ENCODE measurements at regions of chr4 and their contacts with region 1.

Region 1: GRCh38 chr4:109433205-109434006 is at the start of gene SEC24B:
- DNase-seq: peak; percentile 82 to 83
- ATAC-seq: peak; percentile 94
- H3K4me3 ChIP-seq: peak within 1 kb of the TSS; percentile 53 to 80 (median 76)
- H3K27ac ChIP-seq: peak within 1 kb of the TSS; percentile 79 to 94 (median 88)
- H3K4me1 ChIP-seq: peaks cover 44 to 48% of the 10 kb centered on the region in 2 donors
- H3K27me3 ChIP-seq: no peaks in the 10 kb centered on the region
- CTCF ChIP-seq: peak; percentile 71 to 99 (median 97)
- POLR2A ChIP-seq: peak; percentile 79 to 83
- total RNA-seq, gene SEC24B: 29.6 to 93.4 (median 42.9) TPM

Region 2: GRCh38 chr4:109332926-109333464 is 100.4 kb before region 1 on chr4:
- in situ Hi-C with region 1: no loop called
- intact Hi-C with region 1: no loop called
- DNase-seq: no peak
- ATAC-seq: peak in 1 of 2 donors; percentile 30
- H3K4me3 ChIP-seq: no peak overlapping the region
- H3K27ac ChIP-seq: no peak overlapping the region
- H3K4me1 ChIP-seq: no peaks in the 10 kb centered on the region
- H3K27me3 ChIP-seq: no peaks in the 10 kb centered on the region
- CTCF ChIP-seq: peak in 3 of 5 experiments; percentile 12 to 48 (median 43)
- POLR2A ChIP-seq: no peak

Region 3: DNA sequence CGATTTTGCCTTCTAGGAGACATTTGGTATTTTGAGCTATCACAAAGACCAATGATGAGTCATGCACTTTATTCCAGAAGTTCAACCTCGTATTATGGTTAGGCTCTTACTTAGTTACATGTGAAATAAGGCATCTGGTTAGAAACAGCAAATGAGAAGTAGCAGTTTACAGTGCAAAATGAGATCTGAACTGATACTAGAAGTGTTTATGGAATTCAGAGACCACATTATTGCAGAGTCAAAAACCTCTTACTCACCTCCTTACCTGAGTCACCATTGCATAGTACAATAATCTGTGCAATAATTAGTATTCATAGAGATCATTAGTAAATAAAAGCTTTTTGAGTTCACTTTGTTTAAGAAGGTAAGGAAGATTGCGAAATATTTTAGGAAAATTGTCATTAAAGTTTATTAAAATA is 38.9 kb after region 1 on chr4:
- in situ Hi-C with region 1: no loop called
- intact Hi-C with region 1: loop called (anchors 5 kb)
- DNase-seq: no peak
- ATAC-seq: peak in 1 of 2 donors; percentile 61
- H3K4me3 ChIP-seq: no peak overlapping the region
- H3K27ac ChIP-seq: peak overlapping the region in 1 of 4 donors; percentile 29
- H3K4me1 ChIP-seq: peaks cover 7 to 27% of the 10 kb centered on the region in 2 donors
- H3K27me3 ChIP-seq: no peaks in the 10 kb centered on the region
- CTCF ChIP-seq: no peak
- POLR2A ChIP-seq: no peak

Region 4: DNA sequence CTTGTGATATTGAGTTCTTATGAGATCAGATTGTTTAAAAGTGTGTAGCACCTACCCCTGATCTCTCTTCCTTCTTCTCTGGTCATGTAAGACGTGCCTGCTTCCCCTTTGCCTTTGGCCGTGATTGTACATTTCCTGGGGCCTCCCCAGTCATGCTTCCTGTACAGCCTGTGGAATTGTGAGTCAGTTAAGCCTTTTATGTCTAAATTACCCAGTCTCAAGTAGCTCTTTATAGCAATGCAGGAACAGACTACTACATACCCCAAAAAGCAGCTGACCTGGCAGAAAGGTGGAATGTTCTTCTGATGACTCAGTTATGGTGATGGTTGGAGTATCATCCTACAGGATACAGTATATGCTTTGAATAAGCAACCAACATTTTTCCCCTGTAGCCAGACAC is 115.2 kb after region 1 on chr4:
- in situ Hi-C with region 1: loop called in 2 of 4 experiments (anchors 25 kb)
- intact Hi-C with region 1: no loop called
- DNase-seq: no peak
- ATAC-seq: peak; percentile 39
- H3K4me3 ChIP-seq: no peak overlapping the region
- H3K27ac ChIP-seq: peak overlapping the region in 1 of 4 donors; percentile 38
- H3K4me1 ChIP-seq: peaks cover 0 to 2% of the 10 kb centered on the region in 2 donors
- H3K27me3 ChIP-seq: no peaks in the 10 kb centered on the region
- CTCF ChIP-seq: no peak
- POLR2A ChIP-seq: no peak

Region 5: GRCh38 chr4:109662786-109663185 is 229.4 kb after region 1 on chr4:
- in situ Hi-C with region 1: no loop called
- intact Hi-C with region 1: loop called (anchors 2 kb)
- DNase-seq: no peak
- ATAC-seq: no peak
- H3K4me3 ChIP-seq: no peak overlapping the region
- H3K27ac ChIP-seq: no peak overlapping the region
- H3K4me1 ChIP-seq: no peaks in the 10 kb centered on the region
- H3K27me3 ChIP-seq: no peaks in the 10 kb centered on the region
- CTCF ChIP-seq: no peak
- POLR2A ChIP-seq: no peak

Region 6: DNA sequence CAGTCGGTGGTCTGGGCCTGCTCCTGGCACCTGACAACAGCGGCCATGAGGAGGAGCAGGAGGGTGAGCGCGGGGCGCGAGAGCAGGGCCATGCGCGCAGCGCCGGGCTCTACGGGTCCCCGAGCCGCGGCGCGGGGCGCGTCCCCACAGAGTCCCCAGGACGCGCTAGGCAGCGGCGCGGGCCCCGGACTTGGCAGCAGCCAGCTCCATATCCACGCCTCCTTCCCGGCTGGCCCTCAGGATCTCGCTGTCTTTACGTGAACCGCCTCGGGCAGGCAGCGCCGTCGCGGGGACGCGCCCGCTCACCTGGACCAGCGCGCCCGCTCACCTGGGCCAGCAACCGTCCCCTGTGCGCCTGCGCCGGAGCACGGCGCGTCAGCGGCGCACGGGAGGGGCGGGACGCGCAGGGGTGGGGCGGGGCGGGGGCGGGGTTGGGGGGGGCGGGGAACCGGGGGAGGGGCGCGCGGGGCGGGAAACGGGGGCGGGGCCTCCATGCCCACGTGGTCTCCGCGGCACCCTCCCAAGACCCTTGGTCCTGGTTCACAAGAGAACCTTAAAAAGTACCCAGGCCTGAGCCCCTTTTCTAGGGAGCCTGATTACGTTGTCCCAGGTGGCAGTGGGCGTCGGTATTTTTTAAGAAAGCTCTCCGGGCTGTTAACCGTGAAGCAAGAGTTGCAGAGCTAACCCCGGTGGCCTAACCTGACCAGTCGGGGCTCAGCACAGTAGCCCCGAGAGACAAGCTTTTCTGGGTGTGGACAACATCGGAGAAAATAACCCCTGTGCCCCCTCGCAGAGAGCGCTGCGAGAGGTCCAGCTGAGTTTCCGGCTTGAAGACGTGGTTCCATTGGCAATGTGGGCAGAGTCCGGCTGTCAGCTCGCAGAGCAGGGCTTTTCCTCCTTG is 296.6 kb after region 1 on chr4 and contains the start of gene PLA2G12A:
- in situ Hi-C with region 1: no loop called
- intact Hi-C with region 1: loop called (anchors 5 kb)
- DNase-seq: peak; percentile 54 to 61
- ATAC-seq: peak; percentile 77 to 85
- H3K4me3 ChIP-seq: peak within 1 kb of the TSS; percentile 86 to 99 (median 94)
- H3K27ac ChIP-seq: peak within 1 kb of the TSS; percentile 91 to 96 (median 95)
- H3K4me1 ChIP-seq: peaks cover 14 to 19% of the 10 kb centered on the region in 2 donors
- H3K27me3 ChIP-seq: no peaks in the 10 kb centered on the region
- CTCF ChIP-seq: no peak
- POLR2A ChIP-seq: peak; percentile 71 to 72
- total RNA-seq, gene PLA2G12A: 26.7 to 83.1 (median 57.6) TPM

Region 7: DNA sequence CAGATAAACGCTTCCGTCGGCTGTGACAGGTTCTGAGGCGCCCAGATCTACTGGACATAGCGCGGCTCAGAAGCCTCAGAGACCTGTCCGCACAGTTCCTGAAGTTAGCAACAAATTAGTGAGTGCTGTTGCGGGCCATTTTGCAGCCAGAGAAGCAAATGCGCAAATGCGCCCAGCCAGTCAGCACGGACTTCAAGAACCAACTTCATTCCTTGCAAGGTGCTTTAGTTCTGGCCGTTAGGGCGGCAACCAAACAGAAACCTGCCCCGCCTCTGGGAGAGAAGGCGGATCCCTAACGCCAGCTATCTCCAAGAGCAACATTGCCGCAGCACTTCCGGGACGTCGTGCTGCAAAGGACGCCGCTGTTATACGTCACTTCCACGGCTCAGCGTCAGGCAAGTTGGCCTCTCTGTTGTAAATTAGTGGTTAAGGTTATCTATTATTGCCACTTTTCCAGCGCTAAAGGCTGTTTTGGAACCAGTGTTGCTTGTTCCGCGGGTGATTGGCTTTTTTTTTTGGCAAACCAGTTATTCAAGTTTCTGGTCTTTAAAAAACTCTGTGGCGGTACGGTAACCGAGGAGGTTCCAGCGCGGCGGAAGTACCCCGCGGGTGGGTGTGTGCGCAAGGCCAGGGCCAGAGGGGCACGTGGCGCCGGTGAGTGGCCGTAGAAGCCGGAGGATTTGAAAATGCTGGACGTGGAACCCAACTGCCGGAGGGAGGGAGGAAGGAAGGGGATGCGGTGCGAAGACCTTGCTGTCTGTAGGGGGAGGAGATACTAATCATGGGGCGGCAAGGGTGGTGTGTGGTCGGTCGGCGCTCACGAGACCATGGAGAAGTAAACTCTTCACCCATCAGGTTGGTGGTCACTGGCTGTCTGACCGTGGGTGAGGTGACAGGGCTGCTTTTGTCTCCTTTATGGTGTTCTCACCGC is 382.0 kb after region 1 on chr4 and contains the start of gene GAR1:
- in situ Hi-C with region 1: loop called in 1 of 4 experiments (anchors 10 kb)
- intact Hi-C with region 1: loop called (anchors 5 kb)
- DNase-seq: peak; percentile 85 to 86
- ATAC-seq: peak; percentile 99 to 100
- H3K4me3 ChIP-seq: peak within 1 kb of the TSS; percentile 70 to 99 (median 88)
- H3K27ac ChIP-seq: peak within 1 kb of the TSS; percentile 82 to 90 (median 86)
- H3K4me1 ChIP-seq: peaks cover 14 to 22% of the 10 kb centered on the region in 2 donors
- H3K27me3 ChIP-seq: no peaks in the 10 kb centered on the region
- CTCF ChIP-seq: peak in 1 of 5 experiments; percentile 9
- POLR2A ChIP-seq: peak in 1 of 2 donors; percentile 18
- total RNA-seq, gene GAR1: 2.8 to 7.2 (median 3.5) TPM

Measured in gastrocnemius medialis (tissue), 4 donors.